Cardiac septum (tissue), 1 donor: ENCODE measurements at regions of chr16 and their contacts with region 1.

Region 1: DNA sequence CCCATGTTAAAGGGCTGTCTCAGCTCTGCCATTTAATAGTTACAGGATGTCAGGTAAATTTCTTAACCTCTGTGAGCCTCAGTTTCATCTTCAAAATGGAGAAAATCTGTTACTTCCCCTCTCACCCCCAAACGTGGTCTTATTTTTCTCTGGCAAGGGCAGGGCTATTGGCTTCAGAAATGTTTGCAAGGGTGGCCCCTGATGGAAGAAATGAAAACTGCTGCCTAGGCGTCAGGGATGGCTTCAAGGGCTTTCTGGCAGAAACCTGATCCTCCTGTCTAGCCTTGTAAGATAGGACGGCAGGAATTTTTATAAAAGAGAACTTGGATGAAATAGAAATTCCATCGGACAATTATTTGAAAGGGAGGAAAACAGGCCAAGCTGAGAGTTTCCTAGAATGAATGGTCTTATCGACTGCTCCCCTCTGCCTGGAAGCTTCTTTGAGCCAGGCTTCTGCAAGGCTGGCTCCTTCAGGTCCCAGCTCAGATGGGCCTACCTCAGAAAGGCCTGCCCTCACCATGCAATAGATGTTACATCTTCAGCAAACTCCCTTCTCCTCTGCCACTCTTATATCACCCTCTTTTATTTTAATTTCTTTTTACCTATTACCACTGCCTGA is 43.0 kb upstream of the TANGO6 start:
- DNase-seq: no peak

Region 2: DNA sequence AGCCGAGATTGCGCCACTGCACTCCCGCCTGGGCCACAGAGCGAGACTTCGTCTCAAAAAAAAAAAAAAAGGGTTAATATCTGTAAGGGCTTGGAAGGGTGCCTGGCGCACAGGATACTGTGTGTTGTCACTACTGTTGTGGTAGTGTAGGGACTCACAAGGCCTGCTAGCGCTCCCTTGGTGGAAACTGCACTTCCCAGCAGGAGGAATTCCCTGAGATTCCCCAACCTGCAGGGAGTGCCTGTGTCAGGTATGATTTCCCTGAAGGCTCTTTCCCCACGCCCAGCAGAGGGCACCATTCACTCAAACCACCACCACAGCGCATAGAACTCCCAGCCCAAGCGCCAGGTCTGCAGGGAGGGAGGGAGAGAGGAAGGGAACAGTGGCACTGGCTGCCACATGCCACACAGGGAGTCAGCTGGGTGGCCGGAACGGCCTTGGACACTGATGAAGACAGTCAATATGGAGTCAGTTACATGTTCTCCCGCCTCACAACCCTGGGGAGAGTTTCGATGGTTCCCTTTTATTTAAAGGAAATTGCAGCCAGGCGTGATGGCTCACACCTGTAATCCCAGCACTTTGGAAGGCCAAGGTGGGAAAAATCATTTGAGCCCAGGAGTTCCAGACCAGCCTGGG is 96.0 kb before region 1 on chr16:
- intact Hi-C with region 1: loop called (anchors 10 kb)
- DNase-seq: no peak